ENCODE measurements at regions of chr10 and their contacts with region 1.

Region 1: DNA sequence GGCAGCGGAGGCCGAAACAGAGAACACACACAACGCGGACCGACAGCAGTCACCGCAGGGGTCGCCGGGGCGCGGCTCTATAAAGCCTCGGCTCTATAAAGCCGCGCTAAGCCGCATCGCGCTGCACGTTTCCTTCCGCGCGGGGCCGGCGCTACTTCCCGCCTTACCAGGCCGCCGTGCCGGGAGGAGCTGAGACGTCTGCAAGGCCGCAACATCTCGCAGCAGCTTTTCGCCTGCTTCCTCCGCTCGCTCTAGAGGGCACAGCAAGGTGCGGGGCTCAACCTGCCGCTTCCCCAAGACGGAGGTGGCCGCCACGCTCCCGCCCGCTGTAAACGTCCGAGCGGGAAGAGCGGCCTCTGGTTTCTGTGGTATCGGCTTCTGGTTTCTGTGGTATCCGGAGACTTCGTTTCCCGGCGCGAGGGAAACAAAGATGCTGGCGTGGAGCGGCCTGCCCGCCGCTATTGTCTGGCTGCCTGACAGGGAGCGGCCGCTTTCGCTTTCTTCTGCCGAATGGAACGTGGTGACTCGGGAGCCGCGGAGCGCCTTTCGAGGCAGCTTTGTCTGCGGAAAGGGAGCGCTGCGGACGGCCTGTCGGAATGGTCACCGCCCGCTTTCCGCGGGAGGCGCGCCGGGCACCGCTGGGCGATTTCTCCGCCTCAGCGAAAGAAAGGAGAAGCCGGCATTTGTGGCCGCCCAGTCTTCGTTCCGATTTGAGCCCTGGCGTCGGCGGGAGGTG is 91.8 kb downstream of the SPAG6 start:
- DNase-seq: peak; percentile 95
- H3K4me3 ChIP-seq: peak overlapping the region; percentile 60
- H3K27ac ChIP-seq: peak overlapping the region; percentile 87
- H3K4me1 ChIP-seq: peaks cover 15% of the 10 kb centered on the region
- H3K27me3 ChIP-seq: no peaks in the 10 kb centered on the region
- CTCF ChIP-seq: no peak

Region 2: DNA sequence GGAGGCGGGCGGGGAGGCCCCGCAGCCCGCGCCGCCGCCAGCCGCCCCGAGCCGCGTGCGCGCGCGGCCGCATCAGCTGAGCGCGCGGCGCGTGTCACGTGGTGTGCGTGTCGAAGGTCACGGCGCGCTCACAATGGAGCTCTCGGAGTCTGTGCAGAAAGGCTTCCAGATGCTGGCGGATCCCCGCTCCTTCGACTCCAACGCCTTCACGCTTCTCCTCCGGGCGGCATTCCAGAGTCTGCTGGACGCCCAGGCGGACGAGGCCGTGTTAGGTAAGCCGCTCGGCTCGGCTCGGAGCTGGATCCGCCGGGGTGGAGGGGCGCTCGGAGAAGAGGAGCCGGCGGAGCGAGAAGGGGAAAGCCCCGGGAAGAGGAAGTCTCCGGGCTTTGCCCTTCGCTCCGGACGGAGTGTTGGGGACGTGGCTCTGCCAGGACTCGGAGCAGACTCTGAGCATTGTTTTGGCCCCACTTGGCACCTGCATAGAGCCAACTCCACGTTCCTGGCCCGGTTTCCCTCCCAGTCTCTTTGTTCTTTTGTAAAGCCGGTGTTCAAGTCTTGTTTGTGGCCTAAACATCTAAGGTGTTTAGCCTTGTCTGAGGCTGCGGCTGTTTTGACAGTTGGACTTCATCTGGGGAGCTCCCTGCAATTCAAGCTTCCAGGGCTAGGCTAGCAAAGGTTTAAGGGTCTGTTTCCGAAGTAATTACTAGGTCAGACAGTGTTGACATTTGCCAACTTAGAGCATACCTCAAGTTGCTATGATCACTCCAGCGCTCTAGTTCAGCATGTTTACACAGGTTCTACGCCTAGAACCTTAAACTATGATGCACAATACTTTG is 120.5 kb before region 1 on chr10 and contains the start of gene COMMD3:
- CTCF ChIA-PET with region 1: no interaction called
- POLR2A ChIA-PET with region 1: no interaction called
- intact Hi-C with region 1: loop called (anchors 2 kb)
- DNase-seq: peak; percentile 92
- H3K4me3 ChIP-seq: peak within 1 kb of the TSS; percentile 88
- H3K27ac ChIP-seq: peak within 1 kb of the TSS; percentile 90
- H3K4me1 ChIP-seq: peaks cover 20% of the 10 kb centered on the region
- H3K27me3 ChIP-seq: no peaks in the 10 kb centered on the region
- CTCF ChIP-seq: no peak
- total RNA-seq, gene COMMD3: 66.0 and 72.6 TPM in 2 replicates

Measured in A673 (cell line).